ENCODE measurements at regions of chr15 and their contacts with region 1.

Region 1: GRCh38 chr15:39624806-39625205 is 43.9 kb downstream of the THBS1 start:
- DNase-seq: peak; percentile 83
- H3K4me3 Mint-ChIP-seq: peak overlapping the region; percentile 65
- H3K27ac Mint-ChIP-seq: peak overlapping the region; percentile 96
- H3K4me1 Mint-ChIP-seq: peaks cover 75% of the 10 kb centered on the region
- H3K27me3 Mint-ChIP-seq: no peaks in the 10 kb centered on the region

Region 2: DNA sequence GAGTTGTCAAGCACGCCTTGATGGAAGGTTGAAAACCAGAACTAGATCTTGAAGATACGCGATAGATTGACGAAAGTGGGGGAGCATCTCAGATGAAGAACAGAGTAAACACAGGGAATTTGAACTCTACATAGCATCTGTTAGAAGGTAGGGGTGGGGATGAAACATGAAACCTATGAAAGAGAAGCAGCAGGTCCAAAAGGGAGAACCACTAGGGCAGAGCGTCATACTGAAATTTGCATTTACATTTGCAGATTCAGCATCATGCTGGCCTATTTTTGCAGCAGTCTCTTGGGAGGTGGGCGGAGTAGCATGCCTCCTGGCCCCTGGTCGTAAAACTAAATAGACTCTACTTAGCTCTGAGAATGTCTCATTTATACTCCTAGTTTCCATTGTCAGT is 1014.1 kb before region 1 on chr15:
- CTCF ChIA-PET with region 1: no interaction called
- POLR2A ChIA-PET with region 1: no interaction called
- intact Hi-C with region 1: loop called (anchors 2 kb)
- DNase-seq: peak; percentile 80
- H3K4me3 Mint-ChIP-seq: peak overlapping the region; percentile 37
- H3K27ac Mint-ChIP-seq: peak overlapping the region; percentile 99
- H3K4me1 Mint-ChIP-seq: peaks cover 83% of the 10 kb centered on the region
- H3K27me3 Mint-ChIP-seq: no peaks in the 10 kb centered on the region

Region 3: GRCh38 chr15:38991126-38991525 is 633.7 kb before region 1 on chr15:
- CTCF ChIA-PET with region 1: no interaction called
- POLR2A ChIA-PET with region 1: no interaction called
- intact Hi-C with region 1: no loop called
- DNase-seq: no peak
- H3K4me3 Mint-ChIP-seq: no peak overlapping the region
- H3K27ac Mint-ChIP-seq: no peak overlapping the region
- H3K4me1 Mint-ChIP-seq: no peaks in the 10 kb centered on the region
- H3K27me3 Mint-ChIP-seq: peaks cover 4% of the 10 kb centered on the region

Region 4: DNA sequence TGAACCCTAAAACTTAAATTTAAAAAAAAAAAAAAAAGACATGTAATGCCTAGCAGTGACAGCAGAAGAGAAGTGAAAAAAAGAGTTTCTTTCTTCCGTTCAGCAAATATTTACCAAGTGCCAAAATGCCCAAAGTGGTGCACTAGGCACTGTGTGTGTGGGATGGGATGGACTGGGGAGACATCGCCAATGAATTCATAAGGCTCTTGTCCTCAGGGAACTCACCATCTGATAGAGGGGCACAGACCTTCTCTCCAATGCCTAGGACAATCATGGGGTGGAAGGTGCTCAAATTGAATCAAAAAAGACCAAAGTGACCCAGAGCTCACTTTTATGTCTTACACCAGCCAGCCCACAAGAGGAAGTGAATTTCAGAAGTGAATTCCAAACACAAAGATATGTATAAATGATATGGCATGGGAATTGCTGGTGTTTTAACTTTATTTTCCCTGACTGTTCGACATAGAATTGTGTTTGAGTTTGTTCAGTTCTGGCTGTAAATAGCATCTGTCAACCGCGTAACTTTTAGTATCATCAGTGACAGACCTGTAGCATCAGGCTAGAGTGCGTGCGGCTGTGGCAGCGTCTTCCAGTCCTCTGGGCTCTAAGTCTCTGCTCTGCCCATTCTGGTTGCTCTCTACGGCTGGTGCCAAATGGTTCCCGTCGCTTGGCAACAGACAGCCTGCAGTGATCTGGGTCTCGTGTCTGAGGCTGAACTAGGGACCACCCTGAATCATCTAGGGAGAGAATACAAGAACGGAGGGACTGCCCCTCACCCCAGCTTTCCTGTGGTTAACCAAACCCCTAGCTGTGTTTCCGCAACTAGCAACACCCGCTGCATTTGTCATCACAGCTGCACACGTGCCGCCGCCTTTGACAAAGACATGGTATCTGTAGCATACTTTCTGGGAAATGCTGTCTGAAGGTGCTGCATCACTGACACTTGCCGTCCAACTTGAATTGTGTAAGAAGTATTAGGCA is 198.0 kb before region 1 on chr15:
- CTCF ChIA-PET with region 1: no interaction called
- POLR2A ChIA-PET with region 1: interaction called, 4 read pairs
- intact Hi-C with region 1: loop called (anchors 2 kb)
- DNase-seq: peak; percentile 90
- H3K4me3 Mint-ChIP-seq: peak overlapping the region; percentile 13
- H3K27ac Mint-ChIP-seq: peak overlapping the region; percentile 34
- H3K4me1 Mint-ChIP-seq: peaks cover 27% of the 10 kb centered on the region
- H3K27me3 Mint-ChIP-seq: peaks cover 30% of the 10 kb centered on the region

Region 5: GRCh38 chr15:39573844-39574243 is 51.0 kb before region 1 on chr15:
- CTCF ChIA-PET with region 1: no interaction called
- POLR2A ChIA-PET with region 1: no interaction called
- intact Hi-C with region 1: no loop called
- DNase-seq: no peak
- H3K4me3 Mint-ChIP-seq: no peak overlapping the region
- H3K27ac Mint-ChIP-seq: no peak overlapping the region
- H3K4me1 Mint-ChIP-seq: no peaks in the 10 kb centered on the region
- H3K27me3 Mint-ChIP-seq: peaks cover 31% of the 10 kb centered on the region

Region 6: GRCh38 chr15:39643727-39644126 is 18.9 kb after region 1 on chr15:
- CTCF ChIA-PET with region 1: interaction called, 3 read pairs
- POLR2A ChIA-PET with region 1: interaction called, 7 read pairs
- intact Hi-C with region 1: loop called (anchors 1 kb)
- DNase-seq: no peak
- H3K4me3 Mint-ChIP-seq: no peak overlapping the region
- H3K27ac Mint-ChIP-seq: no peak overlapping the region
- H3K4me1 Mint-ChIP-seq: peaks cover 26% of the 10 kb centered on the region
- H3K27me3 Mint-ChIP-seq: no peaks in the 10 kb centered on the region

Region 7: DNA sequence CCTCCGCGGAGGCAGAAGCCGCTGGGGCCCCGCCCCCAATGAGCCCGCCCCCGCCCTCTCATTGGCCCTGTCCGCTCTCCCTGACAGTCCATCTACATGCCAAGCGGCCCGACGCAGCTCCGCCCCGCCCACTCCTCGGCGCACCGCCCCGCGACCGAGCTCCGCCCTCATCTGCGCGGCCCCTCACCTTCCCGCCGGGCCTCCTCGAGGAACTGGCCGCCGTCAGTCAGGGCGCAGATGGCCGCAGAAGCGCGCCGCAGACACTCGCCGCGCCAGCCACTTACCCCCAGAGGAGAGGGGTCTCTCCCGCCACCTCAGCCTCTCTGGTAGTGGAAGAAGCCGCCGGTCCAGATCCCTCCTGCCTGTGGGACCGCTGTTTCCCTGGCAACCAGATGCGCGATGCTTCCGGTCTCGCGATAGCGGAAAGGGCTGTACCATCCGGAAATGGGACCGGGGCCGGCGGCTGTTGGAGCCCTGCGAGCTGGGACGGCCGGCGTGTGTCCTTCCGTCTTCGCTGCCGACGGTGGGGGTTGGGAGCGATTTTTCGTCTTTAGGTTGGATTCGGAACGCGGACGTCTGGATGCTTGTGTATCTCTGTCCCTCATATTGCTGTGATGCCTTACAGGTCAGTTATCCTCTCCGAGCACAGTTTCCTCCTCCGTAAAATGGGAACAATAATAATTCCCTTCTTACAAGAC is 157.8 kb after region 1 on chr15 and contains the start of gene FSIP1:
- CTCF ChIA-PET with region 1: no interaction called
- POLR2A ChIA-PET with region 1: interaction called, 4 read pairs
- intact Hi-C with region 1: loop called (anchors 1 kb)
- DNase-seq: peak; percentile 97
- H3K4me3 Mint-ChIP-seq: peak within 1 kb of the TSS; percentile 79
- H3K27ac Mint-ChIP-seq: peak within 1 kb of the TSS; percentile 93
- H3K4me1 Mint-ChIP-seq: peaks cover 41% of the 10 kb centered on the region
- H3K27me3 Mint-ChIP-seq: no peaks in the 10 kb centered on the region
- total RNA-seq, gene FSIP1: 0.29 to 0.68 TPM

Region 8: DNA sequence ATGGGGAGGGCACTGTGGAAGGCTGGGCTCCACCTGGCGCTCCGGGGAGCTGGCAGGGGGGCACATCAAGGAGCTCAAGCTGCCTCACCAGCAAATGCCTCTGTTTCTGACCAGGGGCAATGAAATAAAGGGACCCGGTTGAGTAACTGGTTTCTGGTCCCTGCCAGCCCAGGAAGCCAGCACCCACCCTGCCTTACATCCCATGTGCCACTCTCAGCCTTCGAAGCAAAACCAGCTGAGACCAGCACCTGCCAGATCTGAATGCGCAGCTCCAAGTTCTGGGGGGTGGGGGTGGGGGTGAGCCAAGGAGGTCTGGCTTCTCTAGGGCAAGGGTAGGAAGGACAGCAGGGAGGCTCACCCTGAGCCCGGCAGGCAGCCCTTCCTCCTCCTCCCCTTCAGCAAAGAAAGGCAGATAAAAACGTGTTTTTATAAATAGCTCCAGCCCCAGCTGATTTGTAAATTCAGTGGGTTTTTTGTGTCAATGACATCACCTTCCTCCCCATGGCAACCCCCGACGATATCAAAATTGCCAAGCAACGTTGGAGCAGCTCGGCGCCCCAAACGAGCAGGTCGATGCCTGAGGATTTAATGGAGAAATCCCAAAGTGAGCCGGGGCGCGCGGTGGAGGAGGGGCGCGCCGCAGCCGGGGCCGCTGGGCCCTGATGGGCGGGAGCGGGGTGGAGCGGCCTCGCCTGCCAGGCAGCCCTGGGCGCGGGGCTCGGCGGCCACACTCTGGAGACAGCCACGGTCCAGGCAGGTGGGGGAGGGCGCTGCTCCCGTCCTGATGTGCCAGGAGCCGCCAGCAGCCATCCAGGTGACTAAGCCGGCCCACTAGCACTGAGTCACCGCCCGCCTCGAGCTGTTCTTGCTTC is 614.0 kb after region 1 on chr15 and contains the start of gene PAK6:
- CTCF ChIA-PET with region 1: no interaction called
- POLR2A ChIA-PET with region 1: no interaction called
- intact Hi-C with region 1: no loop called
- DNase-seq: peak; percentile 63
- H3K4me3 Mint-ChIP-seq: peak within 1 kb of the TSS; percentile 2
- H3K27ac Mint-ChIP-seq: no peak within 1 kb of the TSS
- H3K4me1 Mint-ChIP-seq: peaks cover 3% of the 10 kb centered on the region
- H3K27me3 Mint-ChIP-seq: peaks cover 21% of the 10 kb centered on the region
- total RNA-seq, gene PAK6: 0.69 to 0.73 TPM

Measured in activated CD4-positive, alpha-beta memory T cell treated with anti-CD3 and anti-CD28 coated beads for 36 hours (primary cell).